ENCODE measurements at regions of chr6 and their contacts with region 1.

Region 1: GRCh38 chr6:30915591-30915946 is 1.5 kb downstream of the VARS2 start:
- DNase-seq: no peak
- ATAC-seq: peak; percentile 47

Region 2: DNA sequence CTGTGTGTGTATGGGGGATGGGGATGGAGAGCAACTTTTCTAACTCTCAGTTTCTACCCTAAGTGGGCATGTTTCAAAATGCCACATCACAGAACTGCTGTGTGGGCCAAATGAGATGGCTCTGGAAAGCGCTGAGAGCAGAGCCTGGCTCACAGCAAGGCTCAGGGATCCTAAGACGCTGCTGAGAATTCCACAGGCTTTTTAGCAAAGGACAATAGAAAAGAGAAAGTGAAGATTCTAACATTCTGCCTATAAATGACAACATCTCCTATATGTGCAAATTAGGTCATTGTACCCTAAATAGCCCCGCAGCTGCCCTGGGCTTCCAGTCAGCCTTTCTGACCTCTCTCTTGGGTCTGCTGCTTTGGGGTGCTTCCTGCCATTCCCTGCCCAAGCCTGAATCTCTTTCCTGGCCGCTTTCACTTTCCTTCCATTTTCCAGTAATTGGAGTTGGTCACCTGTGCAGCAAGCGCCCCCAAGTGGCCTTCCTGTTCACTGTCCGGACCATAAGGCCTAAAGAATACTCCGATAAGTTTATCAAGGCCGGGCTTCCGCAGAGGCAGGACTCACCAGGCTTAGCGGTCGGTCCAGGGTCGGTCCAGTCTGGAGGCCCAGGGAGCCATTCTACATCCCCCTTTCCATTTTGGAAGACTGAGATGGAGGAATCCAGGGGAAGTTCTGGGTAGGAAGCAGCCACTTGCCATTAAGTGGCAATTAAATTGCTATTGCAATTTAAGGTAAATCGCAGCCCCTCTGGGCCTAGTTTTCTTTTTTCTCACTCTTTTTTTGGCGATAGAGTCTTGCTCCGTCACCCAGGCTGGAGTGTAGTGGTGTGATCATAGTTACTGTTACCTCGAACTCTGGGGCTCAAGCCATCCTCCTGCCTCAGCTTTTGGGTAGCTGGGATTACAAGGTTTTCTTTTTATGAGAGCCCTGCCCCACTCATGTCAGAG is 37.9 kb before region 1 on chr6:
- intact Hi-C with region 1: no loop called
- DNase-seq: peak; percentile 95
- ATAC-seq: peak; percentile 91

Region 3: DNA sequence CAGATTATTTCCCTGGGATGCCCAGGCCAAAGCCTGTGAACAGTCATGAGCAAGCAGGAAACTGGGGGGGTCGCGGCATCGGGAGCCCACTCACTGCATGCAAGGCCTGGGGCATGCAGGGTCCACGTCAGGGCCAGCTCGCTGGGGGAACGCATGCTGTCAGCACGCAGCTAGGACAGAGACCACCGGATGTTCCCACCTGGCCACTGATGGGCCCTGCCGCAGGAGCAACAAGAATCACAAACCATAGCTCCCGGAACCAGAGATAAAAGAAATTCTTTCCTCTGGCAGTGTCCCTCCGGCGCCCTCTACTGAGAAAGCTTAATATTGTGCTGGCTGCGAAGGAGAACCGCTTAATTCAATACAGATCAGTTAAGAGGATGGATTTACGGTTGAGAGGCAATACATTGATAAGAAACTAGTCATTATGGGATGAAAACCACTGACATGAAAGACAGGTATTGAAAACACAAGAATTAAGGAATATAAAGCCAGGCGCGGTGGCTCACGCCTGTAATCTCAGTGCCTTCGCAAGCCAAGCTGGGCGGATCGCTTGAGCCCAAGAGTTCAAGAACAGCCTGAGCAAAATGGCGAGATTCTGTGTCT is 164.2 kb after region 1 on chr6:
- intact Hi-C with region 1: loop called (anchors 5 kb)
- DNase-seq: peak; percentile 81
- ATAC-seq: peak; percentile 84

Measured in sciatic nerve (tissue), 2 donors.